ENCODE measurements at regions of chr11 and their contacts with region 1.

Region 1: GRCh38 chr11:88552377-88553062 is 215.0 kb upstream of the CTSC start:
- DNase-seq: peak; percentile 40 to 74 (median 72)
- H3K4me3 ChIP-seq: no peak overlapping the region
- H3K27ac ChIP-seq: no peak overlapping the region
- H3K4me1 ChIP-seq: no peaks in the 10 kb centered on the region
- H3K27me3 ChIP-seq: peaks cover 0 to 5% (median 0%) of the 10 kb centered on the region in 5 experiments

Region 2: GRCh38 chr11:88016392-88017170 is 535.9 kb before region 1 on chr11:
- CTCF ChIA-PET with region 1: interaction called, 36 read pairs
- POLR2A ChIA-PET with region 1: no interaction called
- DNase-seq: peak; percentile 70 to 82 (median 79)
- H3K4me3 ChIP-seq: no peak overlapping the region
- H3K27ac ChIP-seq: no peak overlapping the region
- H3K4me1 ChIP-seq: no peaks in the 10 kb centered on the region
- H3K27me3 ChIP-seq: no peaks in the 10 kb centered on the region

Region 3: DNA sequence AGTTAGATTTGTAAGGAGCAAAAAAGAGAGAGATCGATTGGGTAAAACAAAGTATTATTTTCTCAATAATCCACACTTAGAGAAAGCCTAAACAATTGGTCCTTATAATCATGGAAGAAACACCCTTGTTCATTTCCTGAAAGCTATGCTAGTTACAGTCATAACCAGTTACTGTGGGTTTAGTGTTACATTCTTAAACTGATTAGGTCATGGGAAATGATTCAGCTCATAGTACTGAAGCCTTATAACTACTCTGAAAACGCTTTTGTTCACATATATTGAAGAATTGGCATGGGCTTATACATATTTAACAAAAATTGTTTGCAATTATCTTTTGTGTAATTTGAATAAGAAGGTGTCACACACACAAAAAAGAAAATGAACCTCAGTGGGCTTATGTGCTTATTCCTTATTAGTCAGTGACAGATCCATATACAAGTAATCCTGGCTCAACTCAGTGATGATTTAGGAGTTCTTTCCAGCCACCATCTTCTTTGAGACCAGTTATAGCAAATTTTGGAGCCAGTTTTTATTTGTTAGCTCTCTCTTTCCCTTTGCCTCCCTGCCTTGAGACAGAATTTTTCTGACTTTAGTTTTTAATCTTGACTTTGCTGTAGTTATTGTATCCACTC is 16.5 kb before region 1 on chr11:
- CTCF ChIA-PET with region 1: interaction called, 22 read pairs
- POLR2A ChIA-PET with region 1: no interaction called
- DNase-seq: peak; percentile 35 to 77 (median 58)
- H3K4me3 ChIP-seq: no peak overlapping the region
- H3K27ac ChIP-seq: no peak overlapping the region
- H3K4me1 ChIP-seq: no peaks in the 10 kb centered on the region
- H3K27me3 ChIP-seq: no peaks in the 10 kb centered on the region

Region 4: GRCh38 chr11:88590361-88590760 is 37.8 kb after region 1 on chr11:
- CTCF ChIA-PET with region 1: no interaction called
- POLR2A ChIA-PET with region 1: no interaction called
- DNase-seq: no peak
- H3K4me3 ChIP-seq: no peak overlapping the region
- H3K27ac ChIP-seq: no peak overlapping the region
- H3K4me1 ChIP-seq: no peaks in the 10 kb centered on the region
- H3K27me3 ChIP-seq: no peaks in the 10 kb centered on the region